GM12878 (cell line): ENCODE measurements at regions of chr9 and their contacts with region 1.

Region 1: GRCh38 chr9:123225374-123225813 is 43.0 kb downstream of the STRBP start:
- DNase-seq: peak; percentile 81
- ATAC-seq: peak; percentile 98
- H3K4me3 ChIP-seq: no peak overlapping the region
- H3K27ac ChIP-seq: peak overlapping the region; percentile 71
- H3K4me1 ChIP-seq: peaks cover 27% of the 10 kb centered on the region
- H3K27me3 ChIP-seq: no peaks in the 10 kb centered on the region
- CTCF ChIP-seq: peak; percentile 57 to 78 (median 73)
- EP300 ChIP-seq: no peak
- POLR2A ChIP-seq: no peak
- RAD21 ChIP-seq: peak; percentile 85

Region 2: DNA sequence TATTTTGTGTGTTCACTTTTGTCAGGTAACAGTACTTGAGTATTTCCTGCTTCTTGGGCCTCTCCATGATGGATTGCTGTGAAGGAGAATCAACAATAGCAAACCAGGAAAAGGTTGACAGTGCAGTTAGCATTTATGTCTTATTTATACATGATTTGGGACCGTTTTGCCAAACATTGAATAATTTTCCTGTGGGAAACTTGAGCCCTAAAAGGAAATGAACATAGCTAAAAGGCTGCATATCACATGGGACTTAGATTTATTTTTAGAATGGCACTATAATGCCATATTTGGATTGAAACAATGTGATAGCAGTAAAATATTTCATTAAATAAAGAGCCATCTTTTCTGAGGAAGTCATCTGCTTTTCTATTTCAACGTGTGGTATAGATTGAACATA is 176.6 kb before region 1 on chr9:
- CTCF ChIA-PET with region 1: no interaction called
- POLR2A ChIA-PET with region 1: no interaction called
- RAD21 ChIA-PET with region 1: no interaction called
- SMC1A ChIA-PET with region 1: no interaction called
- in situ Hi-C with region 1: no loop called
- intact Hi-C with region 1: no loop called
- DNase-seq: no peak
- ATAC-seq: no peak
- H3K4me3 ChIP-seq: no peak overlapping the region
- H3K27ac ChIP-seq: no peak overlapping the region
- H3K4me1 ChIP-seq: no peaks in the 10 kb centered on the region
- H3K27me3 ChIP-seq: no peaks in the 10 kb centered on the region
- CTCF ChIP-seq: no peak
- EP300 ChIP-seq: no peak
- POLR2A ChIP-seq: no peak
- RAD21 ChIP-seq: no peak

Region 3: GRCh38 chr9:123081824-123082223 is 143.6 kb before region 1 on chr9:
- CTCF ChIA-PET with region 1: interaction called, 14 read pairs
- POLR2A ChIA-PET with region 1: interaction called, 3 read pairs
- RAD21 ChIA-PET with region 1: interaction called, 15 read pairs
- SMC1A ChIA-PET with region 1: interaction called, 15 read pairs
- in situ Hi-C with region 1: no loop called
- intact Hi-C with region 1: loop called (anchors 5 kb)
- DNase-seq: peak; percentile 13
- ATAC-seq: peak; percentile 78
- H3K4me3 ChIP-seq: no peak overlapping the region
- H3K27ac ChIP-seq: no peak overlapping the region; the same call in 1 of the 2 replicates
- H3K4me1 ChIP-seq: no peaks in the 10 kb centered on the region
- H3K27me3 ChIP-seq: no peaks in the 10 kb centered on the region
- CTCF ChIP-seq: peak; percentile 43 to 75 (median 69); a peak in 5 of 6 replicates
- EP300 ChIP-seq: no peak
- POLR2A ChIP-seq: no peak
- RAD21 ChIP-seq: peak; percentile 77

Region 4: GRCh38 chr9:123091459-123091858 is 133.9 kb before region 1 on chr9:
- CTCF ChIA-PET with region 1: interaction called, 12 read pairs
- POLR2A ChIA-PET with region 1: no interaction called
- RAD21 ChIA-PET with region 1: interaction called, 5 read pairs
- SMC1A ChIA-PET with region 1: interaction called, 8 read pairs
- in situ Hi-C with region 1: no loop called
- intact Hi-C with region 1: no loop called
- DNase-seq: no peak
- ATAC-seq: no peak
- H3K4me3 ChIP-seq: no peak overlapping the region
- H3K27ac ChIP-seq: no peak overlapping the region
- H3K4me1 ChIP-seq: peaks cover 8% of the 10 kb centered on the region
- H3K27me3 ChIP-seq: no peaks in the 10 kb centered on the region
- CTCF ChIP-seq: peak in 2 of 3 experiments; percentile 6 to 15; a peak in 2 of 6 replicates
- EP300 ChIP-seq: no peak
- POLR2A ChIP-seq: no peak
- RAD21 ChIP-seq: 0 out of 2 replicates have a peak, but pooled peaks have one; percentile 10

Region 5: GRCh38 chr9:123102375-123103110 is 122.9 kb before region 1 on chr9:
- CTCF ChIA-PET with region 1: interaction called, 24 read pairs
- POLR2A ChIA-PET with region 1: no interaction called
- RAD21 ChIA-PET with region 1: interaction called, 4 read pairs
- SMC1A ChIA-PET with region 1: interaction called, 23 read pairs
- in situ Hi-C with region 1: no loop called
- intact Hi-C with region 1: no loop called
- DNase-seq: no peak
- ATAC-seq: 0 out of 3 replicates have a peak, but pooled peaks have one; percentile 20
- H3K4me3 ChIP-seq: no peak overlapping the region
- H3K27ac ChIP-seq: no peak overlapping the region
- H3K4me1 ChIP-seq: no peaks in the 10 kb centered on the region
- H3K27me3 ChIP-seq: no peaks in the 10 kb centered on the region
- CTCF ChIP-seq: peak; percentile 17 to 34 (median 22); a peak in 3 of 6 replicates
- EP300 ChIP-seq: no peak
- POLR2A ChIP-seq: no peak
- RAD21 ChIP-seq: peak; percentile 42

Region 6: DNA sequence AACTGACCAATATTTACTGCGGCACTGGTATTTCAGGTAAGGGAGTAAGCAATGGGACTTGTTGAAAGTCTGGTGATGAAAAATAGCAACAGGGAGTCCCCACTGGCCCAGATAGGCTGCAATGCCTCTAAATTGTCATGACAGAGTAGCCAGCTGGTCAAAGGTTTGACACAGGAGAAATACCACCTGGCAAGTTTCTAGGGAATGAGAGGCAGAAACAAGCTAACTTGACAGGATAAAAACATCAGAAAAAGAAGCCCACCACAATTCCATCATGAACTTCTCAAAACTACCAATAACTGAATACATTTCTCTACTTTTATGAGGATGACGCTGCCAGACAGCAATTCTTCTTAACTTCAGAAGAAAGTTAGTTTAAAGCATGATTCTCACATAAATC is 56.8 kb before region 1 on chr9:
- CTCF ChIA-PET with region 1: interaction called, 12 read pairs
- POLR2A ChIA-PET with region 1: no interaction called
- RAD21 ChIA-PET with region 1: interaction called, 4 read pairs
- SMC1A ChIA-PET with region 1: interaction called, 5 read pairs
- in situ Hi-C with region 1: no loop called
- intact Hi-C with region 1: loop called (anchors 5 kb)
- DNase-seq: no peak
- ATAC-seq: no peak
- H3K4me3 ChIP-seq: no peak overlapping the region
- H3K27ac ChIP-seq: no peak overlapping the region
- H3K4me1 ChIP-seq: peaks cover 13% of the 10 kb centered on the region
- H3K27me3 ChIP-seq: no peaks in the 10 kb centered on the region
- CTCF ChIP-seq: no peak
- EP300 ChIP-seq: no peak
- POLR2A ChIP-seq: no peak
- RAD21 ChIP-seq: no peak

Region 7: DNA sequence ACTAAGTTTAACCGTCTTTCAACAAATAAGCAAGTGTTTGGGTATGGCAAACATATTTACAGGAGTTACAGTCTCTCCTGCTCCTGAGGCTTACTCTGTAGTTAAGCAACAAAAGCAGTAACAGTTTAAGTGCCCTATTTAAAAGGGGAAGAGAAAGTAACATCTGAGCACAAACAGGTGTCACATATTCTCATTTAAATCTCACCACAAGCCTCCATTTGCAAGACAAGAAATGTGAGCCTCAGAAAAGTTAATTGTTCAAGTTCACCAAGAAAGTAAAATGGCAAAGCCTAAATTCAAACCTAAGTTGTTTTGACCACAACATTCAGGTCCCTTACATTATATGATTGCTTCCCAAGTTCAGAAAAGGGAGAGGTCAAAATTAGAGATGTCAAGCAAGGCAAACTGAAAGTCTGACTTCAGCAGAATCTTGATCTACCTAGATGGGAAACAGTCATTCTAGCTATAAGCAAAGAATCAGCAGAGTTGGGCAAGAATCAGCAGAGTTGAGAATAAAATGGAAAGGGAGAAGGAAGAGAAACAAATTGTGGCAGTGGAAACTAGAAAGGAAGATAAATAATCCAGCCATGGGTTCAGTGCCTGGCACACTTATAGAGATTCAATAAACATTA is 50.4 kb before region 1 on chr9:
- CTCF ChIA-PET with region 1: interaction called, 9 read pairs
- POLR2A ChIA-PET with region 1: interaction called, 4 read pairs
- RAD21 ChIA-PET with region 1: interaction called, 4 read pairs
- SMC1A ChIA-PET with region 1: interaction called, 5 read pairs
- in situ Hi-C with region 1: loop called (anchors 5 kb)
- intact Hi-C with region 1: loop called (anchors 5 kb)
- DNase-seq: peak; percentile 75
- ATAC-seq: peak; percentile 97
- H3K4me3 ChIP-seq: no peak overlapping the region; the same call in 1 of the 2 replicates
- H3K27ac ChIP-seq: peak overlapping the region; percentile 95
- H3K4me1 ChIP-seq: peaks cover 45% of the 10 kb centered on the region
- H3K27me3 ChIP-seq: no peaks in the 10 kb centered on the region
- CTCF ChIP-seq: no peak
- EP300 ChIP-seq: peak; percentile 91 to 93
- POLR2A ChIP-seq: no peak
- RAD21 ChIP-seq: no peak

Region 8: GRCh38 chr9:123338710-123339665 is 113.6 kb after region 1 on chr9:
- CTCF ChIA-PET with region 1: interaction called, 8 read pairs
- POLR2A ChIA-PET with region 1: interaction called, 8 read pairs
- RAD21 ChIA-PET with region 1: interaction called, 5 read pairs
- SMC1A ChIA-PET with region 1: interaction called, 11 read pairs
- in situ Hi-C with region 1: loop called (anchors 5 kb)
- intact Hi-C with region 1: no loop called
- DNase-seq: peak; percentile 94
- ATAC-seq: peak; percentile 80
- H3K4me3 ChIP-seq: peak overlapping the region; percentile 60
- H3K27ac ChIP-seq: peak overlapping the region; percentile 99
- H3K4me1 ChIP-seq: peaks cover 90% of the 10 kb centered on the region
- H3K27me3 ChIP-seq: no peaks in the 10 kb centered on the region
- CTCF ChIP-seq: no peak
- EP300 ChIP-seq: peak in 1 of 2 experiments; percentile 88; a peak in 3 of 4 replicates
- POLR2A ChIP-seq: peak; percentile 80
- RAD21 ChIP-seq: 0 out of 2 replicates have a peak, but pooled peaks have one; percentile 20